HCT116 (cell line): ENCODE measurements at regions of chr17 and their contacts with region 1.

Region 1: GRCh38 chr17:48678141-48678971 is 44.0 kb downstream of the PRAC1 start:
- DNase-seq: peak; percentile 28
- ATAC-seq: peak; percentile 97
- H3K4me3 ChIP-seq: peak overlapping the region; percentile 12 to 26; a peak in 2 of 4 replicates
- H3K27ac ChIP-seq: peak overlapping the region; percentile 12; the same call in 1 of the 2 replicates
- H3K4me1 ChIP-seq: peaks cover 0 to 13% of the 10 kb centered on the region in 2 experiments; a peak in 2 of 4 replicates
- H3K27me3 ChIP-seq: no peaks in the 10 kb centered on the region
- CTCF ChIP-seq: peak; percentile 99 to 100 (median 99)
- POLR2A ChIP-seq: no peak
- RAD21 ChIP-seq: peak; percentile 98

Region 2: DNA sequence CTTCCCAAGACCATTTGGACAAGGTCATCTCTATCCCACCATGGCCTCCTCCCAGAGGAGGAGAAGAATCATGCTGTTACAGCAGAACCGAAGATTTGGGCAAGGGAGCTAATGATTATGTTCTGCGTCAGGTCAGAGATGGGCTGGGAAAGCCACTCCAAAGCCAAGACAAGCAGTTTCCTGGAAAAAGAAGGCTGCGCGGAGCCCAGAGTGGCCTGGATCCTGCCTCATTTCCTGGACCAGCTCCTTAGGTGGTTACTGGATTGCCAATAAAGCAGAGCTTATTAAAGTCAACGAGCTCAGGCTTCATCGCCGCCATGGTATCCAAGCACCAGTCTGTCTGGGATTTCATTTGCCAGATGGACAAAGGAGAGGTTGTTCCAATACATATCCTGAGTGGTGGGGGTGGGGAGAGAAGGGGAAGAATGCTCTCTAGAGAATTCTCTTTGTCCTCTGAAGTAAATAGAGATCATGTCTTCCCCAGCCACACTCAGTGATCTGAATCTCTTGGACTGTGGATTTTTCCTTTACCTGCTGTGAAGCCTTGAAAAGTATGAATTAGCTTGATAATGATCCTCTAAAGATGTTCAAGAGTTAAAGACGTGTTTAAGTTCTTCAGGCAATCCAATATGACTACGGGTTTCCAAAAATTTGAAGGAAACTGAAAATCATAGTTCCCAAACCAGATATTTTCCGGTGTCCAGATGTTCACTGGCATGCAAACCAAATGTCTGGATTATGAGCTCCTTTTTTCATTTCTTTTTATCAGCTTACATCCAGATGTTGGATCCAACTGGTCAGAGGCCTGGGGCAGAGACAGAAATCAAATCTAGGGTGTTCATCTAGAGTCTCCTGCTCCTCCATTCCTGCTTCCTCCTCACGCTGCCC is 26.2 kb after region 1 on chr17:
- CTCF ChIA-PET with region 1: interaction called, 13 read pairs
- POLR2A ChIA-PET with region 1: no interaction called
- RAD21 ChIA-PET with region 1: no interaction called
- intact Hi-C with region 1: no loop called
- DNase-seq: no peak
- ATAC-seq: no peak
- H3K4me3 ChIP-seq: no peak overlapping the region
- H3K27ac ChIP-seq: no peak overlapping the region
- H3K4me1 ChIP-seq: no peaks in the 10 kb centered on the region
- H3K27me3 ChIP-seq: no peaks in the 10 kb centered on the region
- CTCF ChIP-seq: no peak
- POLR2A ChIP-seq: no peak
- RAD21 ChIP-seq: no peak

Region 3: DNA sequence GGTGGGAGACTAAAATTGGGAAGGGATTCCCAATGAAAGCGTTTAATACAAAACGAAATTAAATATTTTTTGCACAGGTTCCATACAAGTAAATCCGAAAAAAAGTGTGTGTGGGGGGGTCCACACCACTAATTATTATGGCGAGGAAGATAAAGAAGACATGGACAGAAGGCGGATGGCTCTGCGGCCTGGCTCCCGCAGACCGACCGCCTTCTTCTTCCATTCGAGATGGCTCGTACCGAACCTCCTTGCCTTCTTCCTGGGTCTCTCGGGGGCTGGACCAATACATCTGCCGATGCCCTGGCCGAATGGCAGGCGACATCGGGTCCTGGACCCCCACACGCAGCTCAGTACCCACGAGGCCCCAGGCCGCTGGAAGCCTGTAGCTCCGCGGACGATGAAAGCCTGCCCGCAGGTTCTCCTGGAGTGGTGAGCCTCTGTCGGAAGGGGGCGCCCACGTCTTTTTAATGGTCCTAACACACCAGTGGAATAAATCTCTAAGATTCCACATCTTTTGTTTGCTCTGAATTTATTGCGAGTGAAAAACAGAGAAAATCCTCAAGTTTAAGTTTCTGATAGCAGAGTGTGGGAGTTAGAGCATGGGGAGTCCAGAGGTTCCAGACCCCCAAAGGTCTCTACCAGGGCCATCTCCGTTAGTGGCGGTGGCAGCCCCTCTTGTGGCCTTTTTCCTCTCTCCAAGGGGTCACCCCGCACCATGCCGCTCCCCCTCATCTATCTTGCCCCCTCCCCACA is 46.1 kb after region 1 on chr17:
- CTCF ChIA-PET with region 1: interaction called, 29 read pairs
- POLR2A ChIA-PET with region 1: interaction called, 6 read pairs
- RAD21 ChIA-PET with region 1: interaction called, 5 to 7 read pairs
- intact Hi-C with region 1: no loop called
- DNase-seq: peak; percentile 32
- ATAC-seq: peak; percentile 74
- H3K4me3 ChIP-seq: no peak overlapping the region
- H3K27ac ChIP-seq: no peak overlapping the region
- H3K4me1 ChIP-seq: peaks cover 5 to 21% of the 10 kb centered on the region in 2 experiments; a peak in 3 of 4 replicates
- H3K27me3 ChIP-seq: no peaks in the 10 kb centered on the region
- CTCF ChIP-seq: peak; percentile 85 to 90 (median 87)
- POLR2A ChIP-seq: no peak
- RAD21 ChIP-seq: peak; percentile 91

Region 4: GRCh38 chr17:48804925-48805411 is 126.6 kb after region 1 on chr17:
- CTCF ChIA-PET with region 1: interaction called, 18 read pairs
- POLR2A ChIA-PET with region 1: no interaction called
- RAD21 ChIA-PET with region 1: interaction called in 1 of 2 experiments, 3 read pairs
- intact Hi-C with region 1: no loop called
- DNase-seq: peak; percentile 77
- ATAC-seq: peak; percentile 100
- H3K4me3 ChIP-seq: peak overlapping the region in 1 of 2 experiments; percentile 4; a peak in 2 of 4 replicates
- H3K27ac ChIP-seq: no peak overlapping the region
- H3K4me1 ChIP-seq: peaks cover 4 to 11% of the 10 kb centered on the region in 2 experiments; a peak in 3 of 4 replicates
- H3K27me3 ChIP-seq: no peaks in the 10 kb centered on the region
- CTCF ChIP-seq: peak; percentile 97 to 100 (median 100)
- POLR2A ChIP-seq: no peak
- RAD21 ChIP-seq: peak; percentile 99